ENCODE measurements at regions of chr17 and their contacts with region 1.

Region 1: GRCh38 chr17:8803531-8804420 is 4.6 kb upstream of the MFSD6L start:
- DNase-seq: peak in 1 of 2 experiments; percentile 42
- H3K4me3 ChIP-seq: no peak overlapping the region
- H3K4me3 Mint-ChIP-seq: no peak overlapping the region
- H3K27ac Mint-ChIP-seq: no peak overlapping the region
- H3K4me1 ChIP-seq: no peaks in the 10 kb centered on the region
- H3K4me1 Mint-ChIP-seq: no peaks in the 10 kb centered on the region
- H3K27me3 ChIP-seq: no peaks in the 10 kb centered on the region
- H3K27me3 Mint-ChIP-seq: no peaks in the 10 kb centered on the region
- CTCF ChIP-seq: peak in 1 of 2 experiments; percentile 39

Region 2: DNA sequence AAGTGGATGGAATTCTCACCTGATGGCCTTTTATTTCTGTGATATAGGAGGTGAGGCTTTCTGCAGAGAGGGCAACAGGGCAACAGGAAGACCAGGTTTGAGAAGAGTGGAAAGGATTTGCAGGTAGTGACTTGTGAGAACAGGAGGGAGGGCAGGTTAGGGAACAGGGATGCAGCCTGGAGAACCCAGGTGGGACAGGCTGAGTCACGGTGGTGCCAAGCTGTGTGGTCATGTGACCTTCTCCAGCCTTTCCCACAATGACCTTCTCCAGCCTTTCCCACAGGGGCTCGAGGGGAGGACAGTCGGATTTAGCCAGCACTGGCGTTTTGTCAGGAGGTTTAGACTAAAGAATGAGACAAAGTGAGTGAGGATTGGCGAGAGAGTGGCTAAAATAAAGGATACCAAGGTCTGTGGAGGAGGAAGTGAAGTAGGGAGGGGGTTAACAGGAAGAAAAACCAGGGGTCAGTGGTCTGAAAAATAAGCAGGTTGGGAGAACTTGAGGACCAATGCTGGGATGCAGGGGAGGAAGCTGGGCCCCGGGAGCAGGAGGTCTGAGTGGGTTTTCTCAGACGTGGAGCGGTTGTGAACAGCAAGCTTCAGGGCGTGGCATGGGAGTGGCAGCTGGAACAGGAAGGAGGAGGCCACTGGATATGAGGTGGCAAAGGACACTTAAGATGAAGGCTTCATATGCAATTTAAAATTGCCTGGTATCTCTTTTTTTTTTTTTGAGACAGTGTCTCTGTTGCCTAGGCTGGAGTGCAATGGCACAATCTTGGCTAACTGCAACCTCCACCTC is 1048.5 kb before region 1 on chr17:
- CTCF ChIA-PET with region 1: no interaction called
- POLR2A ChIA-PET with region 1: no interaction called
- intact Hi-C with region 1: no loop called
- DNase-seq: no peak
- H3K4me3 ChIP-seq: no peak overlapping the region
- H3K4me3 Mint-ChIP-seq: no peak overlapping the region
- H3K27ac Mint-ChIP-seq: no peak overlapping the region
- H3K4me1 ChIP-seq: no peaks in the 10 kb centered on the region
- H3K4me1 Mint-ChIP-seq: no peaks in the 10 kb centered on the region
- H3K27me3 ChIP-seq: no peaks in the 10 kb centered on the region
- H3K27me3 Mint-ChIP-seq: no peaks in the 10 kb centered on the region
- CTCF ChIP-seq: no peak

Region 3: DNA sequence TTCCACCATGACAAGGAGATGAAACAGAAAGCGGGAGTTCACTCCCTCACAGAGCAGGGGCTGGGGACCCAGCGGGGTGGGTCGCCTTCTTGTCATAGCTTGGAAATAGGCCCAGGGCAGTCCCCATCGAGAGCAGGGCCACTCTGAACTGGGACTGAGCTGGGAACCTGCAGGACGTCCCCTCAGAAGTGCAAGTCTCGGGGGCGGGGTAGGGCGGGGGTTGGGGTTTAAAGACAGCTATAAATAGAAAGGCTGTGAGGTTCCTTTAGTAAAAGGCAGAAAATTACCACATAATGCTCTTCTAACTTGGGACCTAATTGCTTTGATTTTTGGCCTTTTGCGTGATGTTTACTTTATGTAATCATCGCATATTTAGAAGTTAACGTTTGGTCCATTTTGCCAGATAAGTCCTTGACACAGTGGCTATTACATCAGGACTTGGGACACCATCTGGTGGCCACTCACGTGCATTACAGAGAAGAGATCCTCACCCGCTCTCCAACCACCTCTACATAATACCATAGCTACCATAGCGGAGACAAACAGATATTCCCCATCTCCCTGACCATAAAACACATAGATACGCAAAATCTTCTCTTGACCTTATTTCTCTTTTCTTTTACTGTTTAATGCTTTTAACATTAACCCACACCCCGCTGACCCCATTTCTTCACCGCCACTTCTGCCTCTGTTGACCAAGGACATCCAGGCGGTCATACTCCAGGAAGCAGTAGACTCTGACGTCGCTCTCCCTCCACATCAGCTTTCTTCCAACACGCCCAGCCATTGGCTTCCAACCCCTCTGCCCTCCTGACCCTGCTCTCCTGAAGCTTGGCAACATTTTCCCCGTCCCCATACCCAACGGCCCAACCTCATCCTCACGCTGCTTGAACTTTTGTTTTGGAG is 91.2 kb after region 1 on chr17:
- CTCF ChIA-PET with region 1: interaction called, 5 read pairs
- POLR2A ChIA-PET with region 1: no interaction called
- intact Hi-C with region 1: loop called (anchors 1 kb)
- DNase-seq: peak; percentile 43 to 59
- H3K4me3 ChIP-seq: no peak overlapping the region
- H3K4me3 Mint-ChIP-seq: no peak overlapping the region
- H3K27ac Mint-ChIP-seq: no peak overlapping the region
- H3K4me1 ChIP-seq: no peaks in the 10 kb centered on the region
- H3K4me1 Mint-ChIP-seq: peaks cover 8% of the 10 kb centered on the region
- H3K27me3 ChIP-seq: no peaks in the 10 kb centered on the region
- H3K27me3 Mint-ChIP-seq: peaks cover 6% of the 10 kb centered on the region
- CTCF ChIP-seq: peak; percentile 42 to 60